ENCODE measurements at regions of chr4 and their contacts with region 1.

Region 1: DNA sequence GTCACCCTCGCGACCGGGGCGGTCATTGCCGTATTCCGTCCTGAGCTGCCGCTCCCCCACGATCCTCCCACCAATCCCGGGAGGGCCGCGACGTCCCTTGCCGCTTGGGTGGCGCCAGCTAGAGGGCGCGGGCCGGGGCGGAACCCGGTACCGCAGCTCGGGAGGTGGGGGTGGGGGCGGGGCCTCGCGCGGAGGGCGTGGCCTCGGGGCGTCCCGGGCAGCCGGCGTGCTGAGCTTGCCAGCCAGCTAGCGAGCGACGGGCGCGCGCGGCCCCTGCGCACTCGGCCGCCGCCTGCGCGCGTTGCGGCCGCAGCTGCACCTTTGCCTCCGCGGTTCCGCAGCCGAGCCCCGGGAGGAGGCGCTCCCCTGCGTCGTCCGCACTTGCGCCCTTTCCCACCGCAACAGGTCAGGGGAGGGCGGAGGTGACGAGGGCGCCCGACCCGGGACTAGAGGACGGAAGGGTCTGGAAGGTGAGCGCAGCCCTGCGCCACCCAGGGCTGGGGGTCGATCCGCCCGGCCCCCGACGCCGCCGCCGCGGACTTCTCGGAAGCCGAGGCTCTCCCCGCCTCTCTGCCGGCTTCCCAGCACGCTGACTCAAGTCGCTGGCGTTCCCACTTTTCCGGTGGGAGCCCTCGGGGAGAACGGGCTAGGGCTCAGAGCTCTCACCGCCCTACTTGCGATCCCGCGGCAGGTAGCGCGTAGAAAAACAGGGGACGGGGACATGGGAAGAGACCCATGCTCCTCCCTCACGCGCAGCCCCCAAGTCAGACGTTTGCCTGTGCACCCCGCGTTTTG is at the start of gene AFF1:
- DNase-seq: peak; percentile 90
- H3K4me3 ChIP-seq: peak within 1 kb of the TSS; percentile 84 to 93
- H3K27ac ChIP-seq: peak within 1 kb of the TSS; percentile 97 to 98
- H3K4me1 ChIP-seq: peaks cover 6% of the 10 kb centered on the region
- H3K27me3 ChIP-seq: no peaks in the 10 kb centered on the region
- CTCF ChIP-seq: peak; percentile 64 to 80 (median 72)
- POLR2A ChIP-seq: peak; percentile 89
- total RNA-seq, gene AFF1: 69.7 to 92.5 TPM

Region 2: GRCh38 chr4:87006676-87007527 is 71.9 kb after region 1 on chr4:
- intact Hi-C with region 1: loop called (anchors 1 kb)
- DNase-seq: peak; percentile 93
- H3K4me3 ChIP-seq: peak overlapping the region; percentile 69 to 82
- H3K27ac ChIP-seq: peak overlapping the region; percentile 96 to 97
- H3K4me1 ChIP-seq: peaks cover 12% of the 10 kb centered on the region
- H3K27me3 ChIP-seq: no peaks in the 10 kb centered on the region
- CTCF ChIP-seq: peak in 1 of 4 experiments; percentile 21
- POLR2A ChIP-seq: peak; percentile 95

Region 3: DNA sequence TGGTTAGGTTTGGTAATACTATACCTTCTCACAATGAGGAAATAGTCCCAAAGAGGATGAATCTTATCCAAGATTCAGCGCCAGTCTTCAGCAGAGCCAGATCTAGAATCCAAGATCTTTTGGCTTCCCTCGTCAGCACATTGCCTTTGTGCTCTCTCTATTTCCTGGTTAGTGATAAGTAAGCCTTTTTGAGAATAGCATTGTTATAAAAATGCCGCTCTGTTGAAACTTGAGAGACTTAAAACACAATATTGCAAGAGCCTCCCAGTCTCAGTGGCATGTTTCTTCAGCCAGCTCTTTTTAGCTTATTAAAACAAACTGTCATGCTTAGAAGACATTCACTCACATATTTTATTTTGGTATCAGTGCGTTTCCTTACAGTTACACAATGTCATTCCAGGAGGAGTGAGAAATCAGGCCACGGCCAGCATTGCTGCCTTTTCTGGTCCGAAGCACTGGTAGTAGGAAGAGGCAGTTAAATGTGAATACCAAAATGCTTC is 144.1 kb after region 1 on chr4:
- intact Hi-C with region 1: loop called (anchors 5 kb)
- DNase-seq: peak; percentile 66
- H3K4me3 ChIP-seq: no peak overlapping the region
- H3K27ac ChIP-seq: peak overlapping the region; percentile 39 to 49
- H3K4me1 ChIP-seq: peaks cover 26% of the 10 kb centered on the region
- H3K27me3 ChIP-seq: no peaks in the 10 kb centered on the region
- CTCF ChIP-seq: no peak
- POLR2A ChIP-seq: no peak

Region 4: GRCh38 chr4:87220094-87220822 is 285.3 kb after region 1 on chr4 and contains the start of gene KLHL8:
- intact Hi-C with region 1: loop called (anchors 5 kb)
- DNase-seq: peak; percentile 71
- H3K4me3 ChIP-seq: peak within 1 kb of the TSS; percentile 62 to 91
- H3K27ac ChIP-seq: peak within 1 kb of the TSS; percentile 92 to 93
- H3K4me1 ChIP-seq: no peaks in the 10 kb centered on the region
- H3K27me3 ChIP-seq: no peaks in the 10 kb centered on the region
- CTCF ChIP-seq: no peak
- POLR2A ChIP-seq: peak; percentile 76
- total RNA-seq, gene KLHL8: 6.2 to 7.7 TPM

Measured in prostate gland (tissue), 2 donors.